GM12878 (cell line): ENCODE measurements at regions of chr9 and their contacts with region 1.

Region 1: DNA sequence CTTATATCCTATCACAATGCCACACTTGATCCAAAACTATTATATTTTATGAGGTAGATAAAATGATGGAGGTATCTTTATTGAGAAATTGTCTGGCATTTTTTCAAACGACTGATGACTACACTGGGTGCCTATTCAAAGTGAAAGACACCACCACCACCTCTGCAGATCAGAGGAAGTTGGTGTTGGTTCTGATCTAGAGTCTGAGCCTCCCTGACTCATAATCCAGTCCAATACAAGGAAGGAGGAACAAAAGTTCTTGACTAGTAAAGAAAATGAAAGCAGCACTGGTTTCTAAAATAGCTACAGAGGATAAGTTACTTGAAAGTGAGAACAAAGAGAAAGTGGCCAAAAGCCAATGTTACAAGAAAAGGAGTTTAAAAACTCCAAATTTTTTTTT is 139.9 kb downstream of the RFX3 start:
- DNase-seq: peak; percentile 63
- ATAC-seq: peak; percentile 98
- H3K4me3 ChIP-seq: no peak overlapping the region
- H3K27ac ChIP-seq: no peak overlapping the region
- H3K4me1 ChIP-seq: peaks cover 4% of the 10 kb centered on the region
- H3K27me3 ChIP-seq: no peaks in the 10 kb centered on the region
- CTCF ChIP-seq: no peak
- EP300 ChIP-seq: 0 out of 4 replicates have a peak, but pooled peaks of 1 of the 2 experiments have one; percentile 10
- POLR2A ChIP-seq: no peak
- RAD21 ChIP-seq: no peak

Region 2: GRCh38 chr9:3367185-3367584 is 18.7 kb before region 1 on chr9:
- CTCF ChIA-PET with region 1: interaction called, 8 read pairs
- POLR2A ChIA-PET with region 1: interaction called, 5 read pairs
- RAD21 ChIA-PET with region 1: no interaction called
- SMC1A ChIA-PET with region 1: interaction called, 20 read pairs
- in situ Hi-C with region 1: no loop called
- intact Hi-C with region 1: no loop called
- DNase-seq: no peak
- ATAC-seq: no peak
- H3K4me3 ChIP-seq: no peak overlapping the region
- H3K27ac ChIP-seq: no peak overlapping the region
- H3K4me1 ChIP-seq: no peaks in the 10 kb centered on the region
- H3K27me3 ChIP-seq: no peaks in the 10 kb centered on the region
- CTCF ChIP-seq: no peak
- EP300 ChIP-seq: no peak
- POLR2A ChIP-seq: no peak
- RAD21 ChIP-seq: no peak

Region 3: GRCh38 chr9:3508521-3509291 is 122.8 kb after region 1 on chr9:
- CTCF ChIA-PET with region 1: no interaction called
- POLR2A ChIA-PET with region 1: no interaction called
- RAD21 ChIA-PET with region 1: no interaction called
- SMC1A ChIA-PET with region 1: interaction called, 3 read pairs
- in situ Hi-C with region 1: no loop called
- intact Hi-C with region 1: loop called (anchors 5 kb)
- DNase-seq: no peak
- ATAC-seq: peak; percentile 74
- H3K4me3 ChIP-seq: peak overlapping the region; percentile 43
- H3K27ac ChIP-seq: peak overlapping the region; percentile 61
- H3K4me1 ChIP-seq: peaks cover 13% of the 10 kb centered on the region
- H3K27me3 ChIP-seq: no peaks in the 10 kb centered on the region
- CTCF ChIP-seq: no peak
- EP300 ChIP-seq: no peak
- POLR2A ChIP-seq: no peak
- RAD21 ChIP-seq: no peak